ENCODE measurements at regions of chr4 and their contacts with region 1.

Region 1: DNA sequence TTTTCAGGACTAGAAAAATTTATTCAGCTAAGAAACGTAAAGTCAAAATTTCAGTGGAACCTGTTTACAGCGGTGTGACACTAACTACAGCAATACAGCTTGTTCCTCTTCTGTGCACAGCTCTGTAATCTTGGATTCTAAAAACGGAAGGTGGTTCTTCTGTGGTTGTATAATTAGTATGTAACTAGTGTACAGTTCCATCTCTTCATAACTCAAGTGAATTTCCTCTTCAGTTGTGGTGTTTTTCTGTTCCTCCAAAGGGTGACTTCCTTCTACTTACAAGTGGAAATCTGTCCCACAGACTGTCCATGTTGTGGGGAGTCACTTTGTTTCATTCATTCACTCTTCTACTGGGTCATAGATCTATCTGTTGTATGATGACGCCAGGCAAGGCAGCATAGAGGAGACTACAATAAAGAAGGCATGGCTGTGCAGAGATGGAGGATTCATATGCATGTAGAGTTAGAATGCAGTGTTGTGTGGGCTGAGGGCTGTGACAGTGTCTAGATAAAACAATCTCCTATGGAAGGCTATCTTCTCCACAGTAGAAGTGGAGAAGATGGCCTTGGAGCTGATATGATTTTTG is 5.4 kb downstream of the DAPP1 start:
- DNase-seq: peak; percentile 71
- ATAC-seq: peak; percentile 68
- H3K4me3 ChIP-seq: peak overlapping the region in 4 of 5 experiments; percentile 6 to 100 (median 24)
- H3K4me3 Mint-ChIP-seq: peak overlapping the region; percentile 86
- H3K27ac ChIP-seq: peak overlapping the region; percentile 48 to 95
- H3K27ac Mint-ChIP-seq: peak overlapping the region; percentile 93
- H3K4me1 ChIP-seq: peaks cover 84 to 86% of the 10 kb centered on the region in 2 donors
- H3K4me1 Mint-ChIP-seq: peaks cover 82% of the 10 kb centered on the region
- H3K27me3 ChIP-seq: no peaks in the 10 kb centered on the region
- H3K27me3 Mint-ChIP-seq: no peaks in the 10 kb centered on the region
- CTCF ChIP-seq: no peak

Region 2: DNA sequence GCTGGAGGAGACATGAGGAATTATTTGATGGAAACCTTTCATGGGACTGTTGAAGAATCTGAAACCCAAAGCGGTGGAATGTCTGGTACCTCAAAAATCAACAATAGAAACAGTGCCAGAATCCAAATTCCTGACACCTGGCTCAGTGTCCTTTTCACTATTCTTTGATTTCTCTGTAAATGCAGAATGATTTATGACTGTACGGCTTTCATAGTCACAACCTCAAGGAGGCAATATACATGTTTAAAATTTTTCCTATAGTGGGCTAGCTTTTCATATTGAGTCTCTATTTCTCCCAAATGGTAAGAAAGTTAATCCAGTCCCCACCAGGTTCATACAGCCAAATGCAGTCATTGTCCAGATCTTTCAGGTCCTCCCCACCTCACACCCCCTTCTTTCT is 13.9 kb after region 1 on chr4:
- CTCF ChIA-PET with region 1: interaction called, 4 read pairs
- POLR2A ChIA-PET with region 1: no interaction called
- intact Hi-C with region 1: loop called (anchors 2 kb)
- DNase-seq: no peak
- ATAC-seq: no peak
- H3K4me3 ChIP-seq: no peak overlapping the region
- H3K4me3 Mint-ChIP-seq: no peak overlapping the region
- H3K27ac ChIP-seq: no peak overlapping the region
- H3K27ac Mint-ChIP-seq: no peak overlapping the region
- H3K4me1 ChIP-seq: peaks cover 0 to 12% of the 10 kb centered on the region in 2 donors
- H3K4me1 Mint-ChIP-seq: peaks cover 39% of the 10 kb centered on the region
- H3K27me3 ChIP-seq: no peaks in the 10 kb centered on the region
- H3K27me3 Mint-ChIP-seq: no peaks in the 10 kb centered on the region
- CTCF ChIP-seq: no peak

Region 3: GRCh38 chr4:99847362-99847976 is 25.5 kb after region 1 on chr4:
- CTCF ChIA-PET with region 1: interaction called, 12 read pairs
- POLR2A ChIA-PET with region 1: interaction called, 13 read pairs
- intact Hi-C with region 1: loop called (anchors 1 kb)
- DNase-seq: peak; percentile 79
- ATAC-seq: peak; percentile 81
- H3K4me3 ChIP-seq: no peak overlapping the region
- H3K4me3 Mint-ChIP-seq: peak overlapping the region; percentile 72
- H3K27ac ChIP-seq: peak overlapping the region; percentile 3 to 56
- H3K27ac Mint-ChIP-seq: peak overlapping the region; percentile 84
- H3K4me1 ChIP-seq: peaks cover 31 to 38% of the 10 kb centered on the region in 2 donors
- H3K4me1 Mint-ChIP-seq: peaks cover 68% of the 10 kb centered on the region
- H3K27me3 ChIP-seq: no peaks in the 10 kb centered on the region
- H3K27me3 Mint-ChIP-seq: no peaks in the 10 kb centered on the region
- CTCF ChIP-seq: no peak

Measured in B cell (primary cell).